Activated CD8-positive, alpha-beta T cell treated with anti-CD3 and anti-CD28 coated beads for 36 hours (primary cell): ENCODE measurements at regions of chr12 and their contacts with region 1.

Region 1: GRCh38 chr12:106282457-106283097 is 20.0 kb upstream of the TCP11L2 start:
- DNase-seq: peak; percentile 58
- ATAC-seq: peak; percentile 88
- H3K4me3 Mint-ChIP-seq: no peak overlapping the region
- H3K27ac Mint-ChIP-seq: no peak overlapping the region
- H3K4me1 Mint-ChIP-seq: peaks cover 14% of the 10 kb centered on the region
- H3K27me3 Mint-ChIP-seq: peaks cover 13% of the 10 kb centered on the region
- CTCF ChIP-seq: peak; percentile 91

Region 2: DNA sequence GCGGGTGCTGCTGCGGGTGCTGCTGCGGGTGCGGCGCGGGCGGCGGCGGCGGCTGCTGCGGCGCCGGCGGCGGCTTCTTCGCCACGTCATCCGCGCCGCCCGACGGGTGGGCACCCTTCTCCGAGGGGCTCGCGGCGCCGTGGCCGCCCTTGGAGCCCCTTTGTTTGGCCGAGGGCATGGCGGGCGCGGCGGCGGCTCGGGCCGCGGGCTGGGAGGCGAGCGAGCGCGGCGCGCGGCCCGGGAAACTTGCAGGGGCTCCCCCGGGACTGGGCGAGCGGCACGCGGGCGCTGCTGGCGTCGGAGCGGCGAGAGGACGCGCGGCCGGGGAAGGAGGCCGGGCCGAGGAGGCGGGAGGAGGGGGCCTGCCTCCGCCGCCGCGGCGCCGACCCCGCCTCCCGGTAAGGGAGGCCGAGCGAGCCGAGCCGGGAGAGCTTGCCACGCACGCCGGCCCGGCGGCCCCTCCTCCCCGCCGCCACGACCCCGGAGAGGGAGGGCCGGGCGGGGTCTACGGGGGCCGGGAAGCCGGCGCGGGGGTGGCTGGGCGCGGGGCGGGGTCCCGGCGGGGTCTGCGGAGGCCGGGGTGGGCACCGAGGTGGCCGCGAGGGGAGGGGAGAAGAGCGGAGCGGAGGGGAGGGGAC is 34.8 kb before region 1 on chr12 and contains the start of gene CKAP4:
- CTCF ChIA-PET with region 1: interaction called, 17 read pairs
- POLR2A ChIA-PET with region 1: no interaction called
- intact Hi-C with region 1: no loop called
- DNase-seq: peak; percentile 52
- ATAC-seq: peak; percentile 60
- H3K4me3 Mint-ChIP-seq: peak within 1 kb of the TSS; percentile 71
- H3K27ac Mint-ChIP-seq: peak within 1 kb of the TSS; percentile 85
- H3K4me1 Mint-ChIP-seq: peaks cover 21% of the 10 kb centered on the region
- H3K27me3 Mint-ChIP-seq: no peaks in the 10 kb centered on the region
- CTCF ChIP-seq: no peak
- total RNA-seq, gene CKAP4: 15.2 to 16.3 TPM

Region 3: DNA sequence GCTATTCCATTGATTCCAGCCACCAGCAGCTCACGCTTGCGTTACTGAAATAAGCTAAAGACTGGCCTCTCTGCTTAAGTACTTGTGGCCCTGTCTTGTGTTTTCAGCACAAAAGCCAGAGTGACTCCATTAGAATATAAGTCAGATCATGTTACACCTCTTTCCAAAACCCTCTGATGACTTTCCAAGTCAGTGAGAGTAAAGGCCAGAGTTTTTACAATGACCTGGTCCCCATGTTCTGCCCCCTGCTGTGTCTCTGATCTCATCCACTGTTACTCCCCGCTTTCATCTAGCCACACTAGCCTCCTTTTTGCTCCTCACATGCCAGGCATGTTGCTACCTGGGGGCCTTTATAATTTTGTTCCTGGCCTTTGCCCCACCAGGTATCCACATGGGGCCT is 27.9 kb before region 1 on chr12:
- CTCF ChIA-PET with region 1: interaction called, 17 read pairs
- POLR2A ChIA-PET with region 1: no interaction called
- intact Hi-C with region 1: no loop called
- DNase-seq: no peak
- ATAC-seq: no peak
- H3K4me3 Mint-ChIP-seq: no peak overlapping the region
- H3K27ac Mint-ChIP-seq: no peak overlapping the region
- H3K4me1 Mint-ChIP-seq: no peaks in the 10 kb centered on the region
- H3K27me3 Mint-ChIP-seq: no peaks in the 10 kb centered on the region
- CTCF ChIP-seq: no peak

Region 4: GRCh38 chr12:106296193-106296877 is 13.8 kb after region 1 on chr12:
- CTCF ChIA-PET with region 1: interaction called, 23 read pairs
- POLR2A ChIA-PET with region 1: interaction called, 3 read pairs
- intact Hi-C with region 1: no loop called
- DNase-seq: no peak
- ATAC-seq: no peak
- H3K4me3 Mint-ChIP-seq: no peak overlapping the region
- H3K27ac Mint-ChIP-seq: no peak overlapping the region
- H3K4me1 Mint-ChIP-seq: peaks cover 18% of the 10 kb centered on the region
- H3K27me3 Mint-ChIP-seq: no peaks in the 10 kb centered on the region
- CTCF ChIP-seq: no peak